ENCODE measurements at regions of chrX and their contacts with region 1.

Region 1: GRCh38 chrX:47482512-47483309 is at the start of gene ZNF41:
- DNase-seq: peak; percentile 65 to 71
- ATAC-seq: peak; percentile 92 to 97 (median 94)
- H3K4me3 ChIP-seq: peak within 1 kb of the TSS; percentile 57 to 91 (median 82)
- H3K27ac ChIP-seq: peak within 1 kb of the TSS; percentile 95 to 99 (median 98)
- H3K4me1 ChIP-seq: peaks cover 0 to 39% (median 12%) of the 10 kb centered on the region in 9 donors
- H3K27me3 ChIP-seq: no peaks in the 10 kb centered on the region
- CTCF ChIP-seq: no peak
- total RNA-seq, gene ZNF41: 10.6 to 19.3 (median 14.8) TPM

Region 2: DNA sequence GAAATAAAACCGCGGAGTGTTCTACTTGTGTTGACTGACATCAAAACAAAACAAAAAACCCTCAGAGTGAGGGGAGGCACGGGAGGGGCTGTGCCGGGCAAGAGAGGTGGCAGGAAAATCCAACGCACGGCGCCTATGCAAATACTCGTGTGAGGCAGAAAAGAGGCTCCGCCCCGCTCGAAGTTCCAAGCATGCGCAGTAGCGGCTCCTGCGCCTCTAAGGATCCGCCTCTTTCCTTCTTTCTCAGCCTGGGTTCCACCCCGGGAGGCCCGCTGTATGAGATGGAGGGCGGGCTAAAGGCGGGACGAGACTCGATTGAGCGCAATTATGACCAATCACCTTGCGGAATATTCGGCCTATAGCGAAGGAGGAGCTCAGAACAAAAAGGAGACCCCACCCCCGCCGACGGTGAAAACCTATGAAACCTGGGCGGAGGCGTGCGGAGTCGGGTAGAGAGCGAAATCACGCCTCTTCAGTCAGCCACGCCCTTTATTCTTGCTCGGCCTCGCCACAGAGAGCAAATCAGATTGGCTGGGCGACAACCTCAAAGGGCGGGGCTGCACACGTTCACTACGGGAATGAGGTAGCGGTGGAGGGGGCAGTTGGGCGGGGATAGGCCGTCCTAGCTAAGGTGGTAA is 264.9 kb before region 1 on chrX:
- intact Hi-C with region 1: loop called in 1 of 10 experiments (anchors 10 kb)
- DNase-seq: peak; percentile 92 to 97
- ATAC-seq: peak; percentile 86 to 94 (median 92)
- H3K4me3 ChIP-seq: peak overlapping the region; percentile 69 to 94 (median 77)
- H3K27ac ChIP-seq: peak overlapping the region; percentile 94 to 99 (median 98)
- H3K4me1 ChIP-seq: peaks cover 0 to 36% (median 24%) of the 10 kb centered on the region in 9 donors
- H3K27me3 ChIP-seq: no peaks in the 10 kb centered on the region
- CTCF ChIP-seq: no peak

Region 3: DNA sequence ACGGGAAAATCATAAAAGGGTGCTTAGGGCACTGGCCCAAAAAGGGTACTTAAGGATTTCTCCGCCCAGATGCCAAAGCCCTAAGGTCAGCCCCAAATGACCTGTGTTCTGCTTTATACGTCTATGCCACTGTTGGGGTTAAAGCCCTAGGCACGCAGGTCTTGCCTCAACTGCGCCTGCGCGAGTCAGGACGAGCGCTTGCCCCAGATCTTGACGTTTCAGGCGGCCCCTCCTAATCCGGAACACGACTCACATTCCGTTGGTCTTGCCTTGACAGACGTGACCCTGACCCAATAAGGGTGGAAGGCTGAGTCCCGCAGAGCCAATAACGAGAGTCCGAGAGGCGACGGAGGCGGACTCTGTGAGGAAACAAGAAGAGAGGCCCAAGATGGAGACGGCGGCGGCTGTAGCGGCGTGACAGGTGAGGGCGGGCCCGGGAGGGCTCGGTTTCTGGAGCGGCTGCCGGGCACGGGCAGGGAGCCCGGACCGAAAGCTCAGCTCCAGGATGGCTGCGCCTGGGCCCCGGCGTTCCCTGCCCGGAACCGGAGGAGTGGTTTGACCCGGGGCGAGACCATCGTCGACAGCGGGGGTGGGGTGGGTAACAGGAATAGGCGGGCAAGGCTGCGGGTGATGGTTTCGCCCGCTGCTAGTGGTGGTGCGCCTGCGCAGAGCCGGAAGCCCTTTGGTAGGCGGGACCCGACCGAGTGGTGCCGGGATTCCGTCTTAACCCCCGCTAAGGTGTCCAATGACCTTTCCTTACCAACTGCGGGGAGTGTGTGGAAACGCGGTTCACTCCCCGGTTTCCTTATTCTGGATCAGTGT is 78.3 kb after region 1 on chrX and contains the start of gene ARAF:
- intact Hi-C with region 1: no loop called
- DNase-seq: peak; percentile 92 to 98
- ATAC-seq: peak; percentile 93 to 96 (median 95)
- H3K4me3 ChIP-seq: peak within 1 kb of the TSS; percentile 41 to 77 (median 68)
- H3K27ac ChIP-seq: peak within 1 kb of the TSS; percentile 90 to 99 (median 96)
- H3K4me1 ChIP-seq: peaks cover 0 to 40% (median 10%) of the 10 kb centered on the region in 9 donors
- H3K27me3 ChIP-seq: no peaks in the 10 kb centered on the region
- CTCF ChIP-seq: no peak
- total RNA-seq, gene ARAF: 73.0 to 93.1 (median 79.8) TPM

Region 4: GRCh38 chrX:47836164-47837072 is 353.7 kb after region 1 on chrX and contains the start of gene ZNF81:
- intact Hi-C with region 1: loop called in 1 of 10 experiments (anchors 5 kb)
- DNase-seq: peak; percentile 95 to 96
- ATAC-seq: peak; percentile 98 to 100 (median 99)
- H3K4me3 ChIP-seq: peak within 1 kb of the TSS; percentile 38 to 69 (median 58)
- H3K27ac ChIP-seq: peak within 1 kb of the TSS in 9 of 10 donors; percentile 39 to 82 (median 75)
- H3K4me1 ChIP-seq: peaks cover 0 to 19% (median 6%) of the 10 kb centered on the region in 9 donors
- H3K27me3 ChIP-seq: no peaks in the 10 kb centered on the region
- CTCF ChIP-seq: no peak
- total RNA-seq, gene ZNF81: 4.1 to 10.1 (median 7.3) TPM

Measured in heart right ventricle (tissue), 16 donors.